CD8-positive, alpha-beta memory T cell (primary cell): ENCODE measurements at regions of chr1 and their contacts with region 1.

Region 1: DNA sequence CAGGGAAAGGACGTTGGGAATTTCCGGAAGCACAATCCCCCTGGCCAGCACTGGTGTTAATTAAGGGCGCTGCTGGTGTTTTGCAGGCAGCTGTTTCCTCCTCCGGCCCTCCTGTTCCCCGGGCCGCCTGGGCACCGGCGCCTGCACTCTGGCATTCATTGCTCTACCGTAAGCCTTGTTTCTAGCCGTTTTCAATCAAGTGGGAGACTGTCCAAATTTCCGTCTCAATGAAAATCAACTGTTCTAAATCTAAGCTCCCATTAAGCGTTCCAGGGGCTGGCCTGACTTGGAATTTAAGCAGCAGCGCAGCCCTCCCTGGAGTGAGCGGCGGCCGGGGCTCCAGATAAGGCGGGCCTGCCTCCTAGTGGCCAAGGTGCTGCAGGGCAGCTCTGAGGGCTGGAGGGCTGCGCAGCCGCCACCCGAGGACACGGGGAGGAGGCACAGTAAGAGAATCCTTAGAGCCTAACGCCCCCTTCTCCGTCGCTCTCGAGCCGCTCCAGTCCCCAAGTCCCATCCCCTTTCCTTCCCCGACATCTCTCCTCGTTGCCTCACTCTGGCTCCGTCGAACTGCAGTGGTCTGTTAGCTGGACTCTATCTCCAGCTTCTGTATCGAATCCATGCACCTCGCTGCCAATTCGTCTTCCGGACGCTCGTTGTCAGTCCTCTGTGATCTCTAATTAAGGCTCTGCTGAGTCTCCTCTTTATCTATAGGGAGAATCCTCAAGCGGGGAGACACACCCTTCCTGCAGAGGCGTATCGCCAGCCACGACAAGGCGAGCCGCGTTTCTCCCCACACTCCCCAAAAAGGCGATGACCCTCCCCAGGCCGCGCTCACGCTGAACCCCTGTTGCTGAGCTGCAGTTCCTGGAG is 57.8 kb upstream of the LRRC8D start:
- DNase-seq: peak; percentile 75 to 90 (median 82)
- H3K4me3 ChIP-seq: peak overlapping the region; percentile 80
- H3K4me3 Mint-ChIP-seq: peak overlapping the region; percentile 85 to 97 (median 88)
- H3K27ac ChIP-seq: peak overlapping the region; percentile 48
- H3K27ac Mint-ChIP-seq: peak overlapping the region; percentile 62 to 96 (median 92)
- H3K4me1 ChIP-seq: peaks cover 43% of the 10 kb centered on the region
- H3K4me1 Mint-ChIP-seq: peaks cover 46 to 55% (median 53%) of the 10 kb centered on the region in 3 donors
- H3K27me3 ChIP-seq: no peaks in the 10 kb centered on the region
- H3K27me3 Mint-ChIP-seq: no peaks in the 10 kb centered on the region

Region 2: GRCh38 chr1:89483010-89483756 is 279.8 kb before region 1 on chr1:
- CTCF ChIA-PET with region 1: interaction called, 41 read pairs
- POLR2A ChIA-PET with region 1: interaction called, 4 read pairs
- DNase-seq: peak; percentile 54 to 78 (median 59)
- H3K4me3 ChIP-seq: no peak overlapping the region
- H3K4me3 Mint-ChIP-seq: no peak overlapping the region
- H3K27ac ChIP-seq: no peak overlapping the region
- H3K27ac Mint-ChIP-seq: no peak overlapping the region
- H3K4me1 ChIP-seq: no peaks in the 10 kb centered on the region
- H3K4me1 Mint-ChIP-seq: peaks cover 4 to 14% (median 13%) of the 10 kb centered on the region in 3 donors
- H3K27me3 ChIP-seq: no peaks in the 10 kb centered on the region
- H3K27me3 Mint-ChIP-seq: peaks cover 2 to 4% of the 10 kb centered on the region in 2 donors

Region 3: DNA sequence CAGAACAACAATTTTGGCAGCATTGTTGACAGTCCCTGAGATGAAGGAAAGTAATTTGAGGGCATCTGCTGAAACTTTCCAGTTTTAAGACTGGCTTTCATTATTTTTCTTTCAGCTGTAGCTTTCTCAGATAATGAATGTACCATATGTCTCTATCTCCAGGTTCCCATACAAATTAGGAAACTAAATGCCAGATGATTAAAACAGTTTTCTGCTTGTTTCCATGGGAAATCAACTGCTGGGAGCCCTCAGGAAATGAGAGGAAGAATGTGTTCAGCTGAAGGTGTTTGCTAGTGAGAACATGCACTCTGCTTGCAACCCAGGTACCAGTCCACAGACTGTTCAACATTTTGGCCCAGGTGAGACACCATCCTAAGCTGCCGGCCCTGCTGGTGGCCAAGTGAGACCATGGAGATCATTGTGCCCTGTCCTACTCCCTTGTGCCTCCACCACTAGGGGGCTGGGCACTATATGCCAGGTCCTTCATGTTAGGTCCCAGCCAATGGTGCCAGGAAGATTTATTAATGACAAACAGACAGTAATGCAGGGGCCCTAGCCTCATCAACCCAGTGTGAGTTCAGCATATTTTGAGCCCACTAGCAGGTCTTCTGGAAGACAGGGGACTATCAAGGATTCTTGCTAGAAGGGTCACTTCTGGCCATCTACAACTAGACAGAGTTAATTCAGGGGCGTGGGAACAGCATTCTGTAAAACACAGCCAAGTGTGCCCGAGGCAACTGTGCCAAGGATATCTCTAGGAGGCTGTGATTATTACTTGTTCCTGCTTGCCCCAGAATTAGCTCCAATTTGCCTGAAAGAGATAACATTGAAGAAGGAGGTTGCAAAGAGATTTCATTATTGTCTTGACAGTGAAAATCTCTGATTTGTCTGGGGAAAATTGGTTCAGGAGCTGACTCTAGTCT is 147.1 kb before region 1 on chr1:
- CTCF ChIA-PET with region 1: interaction called, 56 read pairs
- POLR2A ChIA-PET with region 1: interaction called, 3 read pairs
- DNase-seq: peak in 2 of 5 donors; percentile 13 to 48
- H3K4me3 ChIP-seq: no peak overlapping the region
- H3K4me3 Mint-ChIP-seq: no peak overlapping the region
- H3K27ac ChIP-seq: no peak overlapping the region
- H3K27ac Mint-ChIP-seq: no peak overlapping the region
- H3K4me1 ChIP-seq: peaks cover 38% of the 10 kb centered on the region
- H3K4me1 Mint-ChIP-seq: peaks cover 47 to 86% (median 85%) of the 10 kb centered on the region in 3 donors
- H3K27me3 ChIP-seq: no peaks in the 10 kb centered on the region
- H3K27me3 Mint-ChIP-seq: no peaks in the 10 kb centered on the region

Region 4: GRCh38 chr1:89649783-89650182 is 113.2 kb before region 1 on chr1:
- CTCF ChIA-PET with region 1: interaction called, 12 read pairs
- POLR2A ChIA-PET with region 1: no interaction called
- DNase-seq: no peak
- H3K4me3 ChIP-seq: no peak overlapping the region
- H3K4me3 Mint-ChIP-seq: peak overlapping the region in 5 of 7 donors; percentile 10 to 41 (median 32)
- H3K27ac ChIP-seq: no peak overlapping the region
- H3K27ac Mint-ChIP-seq: peak overlapping the region; percentile 5 to 81 (median 67)
- H3K4me1 ChIP-seq: peaks cover 54% of the 10 kb centered on the region
- H3K4me1 Mint-ChIP-seq: peaks cover 66 to 85% (median 77%) of the 10 kb centered on the region in 3 donors
- H3K27me3 ChIP-seq: no peaks in the 10 kb centered on the region
- H3K27me3 Mint-ChIP-seq: no peaks in the 10 kb centered on the region

Region 5: GRCh38 chr1:89698624-89699023 is 64.4 kb before region 1 on chr1:
- CTCF ChIA-PET with region 1: interaction called, 19 read pairs
- POLR2A ChIA-PET with region 1: no interaction called
- DNase-seq: no peak
- H3K4me3 ChIP-seq: peak overlapping the region; percentile 7
- H3K4me3 Mint-ChIP-seq: peak overlapping the region; percentile 47 to 86 (median 82)
- H3K27ac ChIP-seq: peak overlapping the region; percentile 9
- H3K27ac Mint-ChIP-seq: peak overlapping the region; percentile 68 to 99 (median 88)
- H3K4me1 ChIP-seq: peaks cover 77% of the 10 kb centered on the region
- H3K4me1 Mint-ChIP-seq: peaks cover 84 to 96% (median 95%) of the 10 kb centered on the region in 3 donors
- H3K27me3 ChIP-seq: no peaks in the 10 kb centered on the region
- H3K27me3 Mint-ChIP-seq: no peaks in the 10 kb centered on the region

Region 6: DNA sequence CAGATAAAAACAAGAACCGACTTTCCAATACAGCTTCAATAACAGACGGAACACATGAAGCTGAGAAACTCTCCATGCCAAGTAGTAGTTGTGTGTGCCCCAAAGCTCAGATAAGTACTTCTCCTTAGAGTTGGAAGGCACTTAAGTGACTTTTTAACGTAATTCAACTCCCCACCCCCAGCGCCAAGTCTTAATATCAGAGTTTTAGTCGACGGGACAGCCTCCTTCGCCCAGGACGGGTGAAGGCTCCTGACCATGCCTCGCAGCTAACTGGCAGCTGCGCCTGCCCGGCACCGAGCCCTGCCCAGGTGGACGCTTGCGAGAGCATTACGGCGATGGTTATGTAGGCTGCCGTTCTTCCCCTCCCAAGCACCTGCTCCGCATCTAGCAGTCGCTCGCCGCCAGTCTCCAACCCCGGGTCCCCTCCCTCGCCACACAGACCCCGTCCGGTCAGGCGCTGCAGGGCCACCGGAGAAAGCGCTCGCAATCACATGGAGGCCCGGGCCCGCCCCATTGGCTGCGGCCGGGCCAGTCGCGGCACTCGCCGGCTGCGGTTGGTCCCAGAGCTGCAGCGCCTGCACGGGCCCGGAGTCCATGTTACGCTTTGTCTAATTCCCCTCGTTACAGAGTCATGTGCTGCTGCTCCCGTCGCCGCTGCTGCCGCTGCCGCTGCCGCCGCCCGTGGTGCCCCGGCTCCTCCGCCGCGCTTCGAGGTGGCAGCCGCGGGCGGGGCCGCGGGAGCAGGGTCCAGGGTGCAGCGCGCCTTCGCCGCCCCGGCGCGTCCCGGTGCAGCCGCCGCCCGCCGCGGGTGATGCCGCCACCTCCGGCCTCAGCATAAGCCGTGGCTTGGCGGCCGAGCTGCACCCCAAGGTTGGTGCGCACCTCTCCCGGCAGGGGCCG is 57.7 kb after region 1 on chr1 and contains the start of gene LRRC8D:
- CTCF ChIA-PET with region 1: no interaction called
- POLR2A ChIA-PET with region 1: interaction called, 13 read pairs
- DNase-seq: peak; percentile 49 to 73 (median 71)
- H3K4me3 ChIP-seq: peak within 1 kb of the TSS; percentile 83
- H3K4me3 Mint-ChIP-seq: peak within 1 kb of the TSS; percentile 85 to 92 (median 88)
- H3K27ac ChIP-seq: peak within 1 kb of the TSS; percentile 72
- H3K27ac Mint-ChIP-seq: peak within 1 kb of the TSS in 7 of 8 donors; percentile 21 to 93 (median 86)
- H3K4me1 ChIP-seq: peaks cover 19% of the 10 kb centered on the region
- H3K4me1 Mint-ChIP-seq: peaks cover 26 to 36% (median 33%) of the 10 kb centered on the region in 3 donors
- H3K27me3 ChIP-seq: no peaks in the 10 kb centered on the region
- H3K27me3 Mint-ChIP-seq: no peaks in the 10 kb centered on the region
- total RNA-seq, gene LRRC8D: 39.0 to 41.9 TPM

Region 7: DNA sequence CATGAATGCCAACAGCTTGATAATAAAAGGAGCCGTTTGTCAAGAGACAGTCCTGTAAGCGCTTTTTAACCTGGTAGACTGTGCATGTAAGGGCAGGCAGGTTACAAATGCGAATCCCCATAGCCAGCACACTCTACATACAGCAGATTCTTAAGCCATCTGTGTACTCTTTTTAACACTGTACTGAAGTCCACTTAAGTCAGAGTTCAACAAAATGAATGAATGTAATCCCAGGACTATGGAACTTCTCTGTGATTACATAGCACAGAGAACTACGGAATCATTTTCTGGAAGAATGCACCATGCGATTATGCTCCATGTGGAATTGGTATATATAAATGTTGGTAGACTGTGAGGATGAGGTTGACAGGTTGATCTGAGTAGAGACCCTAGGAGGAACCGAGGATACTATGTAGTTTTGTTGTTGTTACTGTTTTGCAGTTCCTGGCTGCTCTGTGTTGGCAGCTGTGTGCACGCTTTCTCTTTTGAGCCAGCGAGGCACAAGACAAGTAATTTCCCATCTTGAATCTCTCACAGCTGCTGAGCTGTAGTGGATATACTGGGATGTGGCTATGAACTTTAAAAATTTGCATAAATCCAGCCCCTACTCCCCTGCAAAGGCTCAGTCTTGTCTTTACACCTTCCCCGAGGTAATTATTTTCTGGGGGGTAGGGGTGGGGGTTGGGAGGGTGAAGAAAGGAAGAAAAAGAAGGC is 79.7 kb after region 1 on chr1:
- CTCF ChIA-PET with region 1: no interaction called
- POLR2A ChIA-PET with region 1: no interaction called
- DNase-seq: no peak
- H3K4me3 ChIP-seq: peak overlapping the region; percentile 86
- H3K4me3 Mint-ChIP-seq: peak overlapping the region; percentile 89 to 98 (median 95)
- H3K27ac ChIP-seq: peak overlapping the region; percentile 72
- H3K27ac Mint-ChIP-seq: peak overlapping the region; percentile 81 to 96 (median 94)
- H3K4me1 ChIP-seq: peaks cover 32% of the 10 kb centered on the region
- H3K4me1 Mint-ChIP-seq: peaks cover 45 to 51% (median 50%) of the 10 kb centered on the region in 3 donors
- H3K27me3 ChIP-seq: no peaks in the 10 kb centered on the region
- H3K27me3 Mint-ChIP-seq: no peaks in the 10 kb centered on the region